Activated T-helper 1 cell treated with anti-CD3 and anti-CD28 coated beads, Interleukin-12 subunit alpha, Interleukin-12 subunit beta, Interleukin-2, Interleukin-4 antibody, amounts not matched to agents 30 ng/mL and 10 ng/mL and 1 ng/mL, durations not matched to agents 14 hours and 24 hours and 36 hours (primary cell): ENCODE measurements at regions of chr2 and their contacts with region 1.

Region 1: DNA sequence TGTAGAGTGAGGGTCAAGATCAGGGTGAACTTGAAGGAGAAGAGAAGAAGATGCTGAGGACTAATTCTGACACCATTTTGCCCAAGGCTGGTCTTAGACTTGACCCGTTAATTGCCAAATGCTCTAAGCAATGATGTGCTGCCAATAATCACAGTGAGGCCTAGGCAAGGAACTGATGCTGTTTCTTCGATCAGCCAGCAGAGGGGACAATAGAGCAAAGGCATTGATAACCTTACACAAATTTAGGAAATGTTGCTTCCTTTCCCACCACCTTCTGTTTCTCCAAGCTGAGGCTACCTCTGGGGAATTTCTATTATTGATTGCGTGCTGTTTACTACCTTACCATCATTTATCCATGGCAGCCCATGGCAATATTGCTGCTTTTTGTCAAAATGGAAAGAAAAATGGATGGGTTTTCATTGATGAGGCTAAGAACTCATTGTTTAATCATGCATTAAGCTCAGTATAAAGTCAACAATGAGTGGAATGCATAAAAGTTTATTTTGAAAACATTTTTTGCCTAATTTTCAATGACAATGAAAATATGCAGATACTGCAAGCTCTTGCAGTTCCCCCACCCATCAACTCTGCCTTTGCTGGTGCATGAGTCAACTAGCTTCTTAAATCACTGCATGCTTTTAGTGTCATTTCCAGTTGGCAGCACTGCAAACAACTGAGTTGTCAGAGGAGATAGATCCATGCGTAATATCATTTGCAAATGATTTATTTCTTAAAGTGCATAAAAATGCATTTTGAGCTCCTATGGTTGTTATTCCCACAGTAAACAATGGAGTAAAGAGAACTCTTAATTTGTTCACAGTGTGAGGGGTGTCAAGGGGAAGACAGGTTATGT is 116.4 kb upstream of the NYAP2 start:
- DNase-seq: no peak
- H3K4me3 Mint-ChIP-seq: no peak overlapping the region
- H3K27ac Mint-ChIP-seq: no peak overlapping the region
- H3K4me1 Mint-ChIP-seq: no peaks in the 10 kb centered on the region
- H3K27me3 Mint-ChIP-seq: peaks cover 7% of the 10 kb centered on the region

Region 2: DNA sequence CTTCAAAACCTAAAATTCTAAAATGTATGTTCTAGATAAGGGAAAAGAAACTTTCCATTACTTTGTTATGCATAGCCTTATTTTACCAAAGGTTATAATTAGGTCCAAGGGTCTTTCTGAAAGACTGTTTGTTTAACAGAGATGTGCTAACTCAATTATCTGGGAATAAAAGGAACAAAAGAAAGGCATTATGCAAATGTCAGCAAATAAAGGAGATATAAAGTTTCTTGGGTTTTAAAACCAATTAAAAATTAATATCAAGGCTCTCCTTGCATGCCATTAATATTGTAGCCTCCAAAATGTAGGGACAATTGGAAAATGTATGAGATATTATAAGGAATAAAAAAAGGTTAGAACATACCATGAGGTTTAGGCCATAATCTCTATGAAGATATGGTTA is 153.0 kb before region 1 on chr2:
- intact Hi-C with region 1: loop called (anchors 5 kb)
- DNase-seq: no peak
- H3K4me3 Mint-ChIP-seq: no peak overlapping the region
- H3K27ac Mint-ChIP-seq: no peak overlapping the region
- H3K4me1 Mint-ChIP-seq: no peaks in the 10 kb centered on the region
- H3K27me3 Mint-ChIP-seq: peaks cover 3% of the 10 kb centered on the region

Region 3: DNA sequence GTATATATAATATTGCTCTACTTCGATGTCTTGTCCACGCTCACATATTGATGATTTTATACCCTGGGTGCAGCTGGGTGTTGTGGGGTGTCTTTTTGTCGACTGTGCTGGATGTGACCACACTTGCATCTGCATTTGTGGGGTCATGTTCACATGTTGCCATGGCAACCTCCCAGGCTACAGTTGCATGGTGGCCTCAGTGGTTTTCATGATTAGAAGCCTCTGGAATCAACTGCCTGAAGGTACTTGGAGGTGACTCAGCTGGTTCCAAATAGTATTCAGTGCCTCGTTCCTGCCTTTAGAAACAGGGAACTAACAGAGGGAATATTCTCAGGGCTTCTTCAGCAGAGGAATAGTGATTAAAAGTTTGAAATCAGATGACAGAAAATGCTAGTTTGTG is 49.9 kb before region 1 on chr2:
- intact Hi-C with region 1: no loop called
- DNase-seq: no peak
- H3K4me3 Mint-ChIP-seq: no peak overlapping the region
- H3K27ac Mint-ChIP-seq: no peak overlapping the region
- H3K4me1 Mint-ChIP-seq: no peaks in the 10 kb centered on the region
- H3K27me3 Mint-ChIP-seq: no peaks in the 10 kb centered on the region

Region 4: DNA sequence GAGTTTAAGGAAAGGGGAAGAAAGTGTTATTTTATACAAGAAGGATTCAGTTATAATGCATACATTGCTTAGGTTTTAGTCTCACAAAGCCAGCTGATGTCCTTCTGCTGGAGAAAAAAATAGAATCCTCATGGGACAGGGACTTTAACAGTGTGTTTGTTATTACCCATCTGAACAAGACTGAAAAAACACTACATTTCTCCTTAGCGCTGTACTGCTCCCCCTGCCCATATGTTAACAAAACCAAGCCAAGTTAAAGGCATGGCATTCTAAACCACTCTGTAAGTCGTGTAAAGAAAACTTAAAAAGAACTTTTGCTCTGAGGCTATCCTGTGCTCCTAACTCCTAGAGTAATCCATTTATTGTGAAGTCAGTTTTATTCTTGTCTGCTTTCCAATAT is 13.9 kb after region 1 on chr2:
- intact Hi-C with region 1: no loop called
- DNase-seq: no peak
- H3K4me3 Mint-ChIP-seq: no peak overlapping the region
- H3K27ac Mint-ChIP-seq: no peak overlapping the region
- H3K4me1 Mint-ChIP-seq: no peaks in the 10 kb centered on the region
- H3K27me3 Mint-ChIP-seq: peaks cover 2% of the 10 kb centered on the region